Mammary epithelial cell (primary cell): ENCODE measurements at regions of chr3 and their contacts with region 1.

Region 1: GRCh38 chr3:177777699-177778098 is 580.4 kb upstream of the TBL1XR1 start:
- DNase-seq: peak; percentile 68
- H3K4me3 ChIP-seq: no peak overlapping the region
- H3K27ac ChIP-seq: no peak overlapping the region
- H3K4me1 ChIP-seq: peaks cover 25% of the 10 kb centered on the region
- H3K27me3 ChIP-seq: no peaks in the 10 kb centered on the region
- CTCF ChIP-seq: peak; percentile 77 to 84

Region 2: GRCh38 chr3:177050501-177051237 is 727.0 kb before region 1 on chr3:
- CTCF ChIA-PET with region 1: interaction called, 3 read pairs
- dilution Hi-C with region 1: no loop called
- in situ Hi-C with region 1: loop called in 1 of 2 experiments (anchors 25 kb)
- intact Hi-C with region 1: loop called (anchors 1 kb)
- DNase-seq: peak; percentile 24
- H3K4me3 ChIP-seq: no peak overlapping the region
- H3K27ac ChIP-seq: peak overlapping the region; percentile 22
- H3K4me1 ChIP-seq: peaks cover 8% of the 10 kb centered on the region
- H3K27me3 ChIP-seq: no peaks in the 10 kb centered on the region
- CTCF ChIP-seq: peak; percentile 40 to 54

Region 3: GRCh38 chr3:177597311-177598096 is 180.2 kb before region 1 on chr3:
- CTCF ChIA-PET with region 1: interaction called, 5 read pairs
- dilution Hi-C with region 1: no loop called
- in situ Hi-C with region 1: no loop called
- intact Hi-C with region 1: loop called (anchors 2 kb)
- DNase-seq: peak; percentile 91
- H3K4me3 ChIP-seq: no peak overlapping the region
- H3K27ac ChIP-seq: peak overlapping the region; percentile 89
- H3K4me1 ChIP-seq: peaks cover 77% of the 10 kb centered on the region
- H3K27me3 ChIP-seq: no peaks in the 10 kb centered on the region
- CTCF ChIP-seq: no peak

Region 4: DNA sequence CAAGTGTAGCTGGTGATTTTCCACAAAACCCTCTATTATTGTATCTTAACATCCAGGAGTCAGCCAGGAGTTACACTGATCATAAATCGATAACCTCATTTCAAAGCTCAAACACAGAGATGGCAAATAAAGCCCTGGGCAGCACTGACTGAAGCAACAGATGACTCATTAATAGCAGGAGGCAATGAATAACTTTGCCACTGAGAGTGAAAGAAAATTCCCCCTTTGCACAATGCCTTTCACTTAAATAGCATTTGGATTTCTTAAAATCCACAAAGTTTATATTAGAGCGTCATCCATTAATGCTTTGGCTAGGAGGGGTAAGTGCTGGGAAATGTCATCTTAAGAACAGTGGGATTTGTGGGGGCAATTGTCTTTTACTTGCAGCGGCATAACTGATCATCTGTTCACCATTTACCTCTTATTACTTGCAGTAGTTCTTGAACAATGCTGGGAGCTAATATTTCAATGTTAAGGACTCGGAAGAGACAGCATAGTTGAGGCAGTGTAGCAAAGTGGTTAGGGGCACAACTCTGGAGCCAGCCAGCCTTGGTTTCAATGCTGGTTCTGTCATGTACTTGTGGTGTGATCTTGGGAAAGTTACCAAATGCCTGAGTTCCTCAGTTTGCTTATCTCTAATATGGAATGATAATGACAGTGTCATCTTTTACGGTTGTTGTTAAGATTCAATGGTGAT is 50.0 kb after region 1 on chr3:
- CTCF ChIA-PET with region 1: no interaction called
- dilution Hi-C with region 1: loop called (anchors 5 kb)
- in situ Hi-C with region 1: no loop called
- intact Hi-C with region 1: no loop called
- DNase-seq: peak; percentile 93
- H3K4me3 ChIP-seq: no peak overlapping the region
- H3K27ac ChIP-seq: peak overlapping the region; percentile 78
- H3K4me1 ChIP-seq: peaks cover 52% of the 10 kb centered on the region
- H3K27me3 ChIP-seq: no peaks in the 10 kb centered on the region
- CTCF ChIP-seq: no peak